Endothelial cell of umbilical vein (primary cell): ENCODE measurements at regions of chr22 and their contacts with region 1.

Region 1: DNA sequence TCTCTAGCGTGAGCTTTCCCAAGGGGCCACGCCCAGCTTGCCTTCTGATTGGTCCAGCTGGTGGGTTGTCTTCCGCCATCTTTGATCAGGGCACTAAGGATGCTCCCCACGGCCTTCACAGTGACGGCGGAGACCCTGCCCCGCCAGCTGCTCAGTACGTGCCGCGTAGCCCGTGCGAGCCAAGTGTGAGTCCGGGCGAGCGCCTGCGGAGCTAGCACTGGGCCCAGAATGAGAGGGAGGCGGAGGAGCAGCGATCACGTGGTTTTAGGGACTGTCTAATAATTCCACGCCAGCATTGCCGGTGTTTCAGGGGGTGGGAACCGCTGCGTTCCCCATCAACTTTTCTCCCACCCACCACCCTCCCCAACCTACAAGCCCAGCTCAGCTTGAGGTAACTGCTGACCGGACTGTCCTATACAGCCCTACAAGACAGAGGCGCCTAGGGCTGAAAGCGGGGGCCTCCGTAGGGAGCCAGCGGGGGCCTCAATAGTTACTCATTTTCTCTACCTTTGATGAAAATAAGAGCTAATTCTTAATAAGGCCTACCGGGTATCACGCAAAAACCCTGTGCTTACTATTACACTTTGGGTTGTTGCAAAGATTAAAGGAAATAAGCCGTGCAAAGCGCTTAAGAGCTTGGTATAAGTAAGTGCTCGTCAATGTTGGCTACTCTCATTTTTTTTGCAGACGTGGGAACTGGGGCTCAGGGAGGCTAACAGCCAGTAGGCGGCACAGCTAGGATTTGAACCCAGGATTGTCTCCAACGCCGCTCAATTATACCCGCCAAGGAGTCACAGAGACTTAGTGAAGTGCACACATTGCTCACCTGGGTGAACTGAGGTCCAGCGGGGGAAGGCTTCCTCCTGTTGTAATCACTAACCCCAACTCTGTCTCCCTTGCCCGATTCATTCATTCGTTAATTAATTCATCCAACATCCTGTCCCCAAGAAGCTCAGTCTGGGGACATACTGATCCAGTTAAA is 1.3 kb upstream of the MTFP1 start:
- DNase-seq: peak; percentile 100
- H3K4me3 ChIP-seq: peak overlapping the region; percentile 2 to 28 (median 19)
- H3K27ac ChIP-seq: peak overlapping the region; percentile 98
- H3K4me1 ChIP-seq: peaks cover 59% of the 10 kb centered on the region
- H3K27me3 ChIP-seq: no peaks in the 10 kb centered on the region
- CTCF ChIP-seq: peak in 1 of 2 donors; percentile 5
- POLR2A ChIP-seq: peak; percentile 72

Region 2: DNA sequence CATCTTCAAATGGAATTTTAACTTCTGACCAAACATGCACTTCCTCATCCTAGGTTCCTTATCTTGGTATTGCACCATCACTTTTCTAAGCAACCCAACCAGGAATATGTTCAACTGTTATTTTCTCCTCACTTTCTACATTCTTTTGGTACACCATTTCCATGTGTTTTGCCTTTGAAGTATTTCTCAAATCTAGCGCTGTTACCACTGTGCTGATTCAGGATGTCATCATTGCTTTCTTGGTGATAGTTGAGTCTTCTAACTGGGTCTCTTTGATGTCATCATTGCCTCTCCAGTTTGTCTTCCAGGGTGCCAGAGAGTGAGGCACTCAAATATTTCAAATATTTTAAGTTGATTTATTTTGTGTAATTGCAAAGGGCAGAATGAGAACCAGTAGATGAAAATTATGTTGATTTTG is 296.5 kb before region 1 on chr22:
- CTCF ChIA-PET with region 1: no interaction called
- POLR2A ChIA-PET with region 1: no interaction called
- dilution Hi-C with region 1: no loop called
- intact Hi-C with region 1: no loop called
- DNase-seq: no peak
- H3K4me3 ChIP-seq: no peak overlapping the region
- H3K27ac ChIP-seq: no peak overlapping the region
- H3K4me1 ChIP-seq: no peaks in the 10 kb centered on the region
- H3K27me3 ChIP-seq: peaks cover 13 to 16% of the 10 kb centered on the region in 2 experiments
- CTCF ChIP-seq: no peak
- POLR2A ChIP-seq: no peak

Region 3: GRCh38 chr22:30305519-30305905 is 118.8 kb before region 1 on chr22:
- CTCF ChIA-PET with region 1: no interaction called
- POLR2A ChIA-PET with region 1: no interaction called
- dilution Hi-C with region 1: no loop called
- intact Hi-C with region 1: no loop called
- DNase-seq: peak; percentile 55
- H3K4me3 ChIP-seq: no peak overlapping the region
- H3K27ac ChIP-seq: peak overlapping the region; percentile 41
- H3K4me1 ChIP-seq: peaks cover 36% of the 10 kb centered on the region
- H3K27me3 ChIP-seq: no peaks in the 10 kb centered on the region
- CTCF ChIP-seq: no peak
- POLR2A ChIP-seq: peak; percentile 41

Region 4: GRCh38 chr22:30386960-30387827 is 37.1 kb before region 1 on chr22 and contains the start of gene RNF215:
- CTCF ChIA-PET with region 1: interaction called, 58 read pairs
- POLR2A ChIA-PET with region 1: no interaction called
- dilution Hi-C with region 1: no loop called
- intact Hi-C with region 1: loop called (anchors 1 kb)
- DNase-seq: peak; percentile 78
- H3K4me3 ChIP-seq: peak within 1 kb of the TSS; percentile 36 to 70 (median 43)
- H3K27ac ChIP-seq: peak within 1 kb of the TSS; percentile 20
- H3K4me1 ChIP-seq: peaks cover 15% of the 10 kb centered on the region
- H3K27me3 ChIP-seq: no peaks in the 10 kb centered on the region
- CTCF ChIP-seq: peak; percentile 90 to 91
- POLR2A ChIP-seq: no peak
- total RNA-seq, gene RNF215: 24.4 and 26.9 TPM in 2 replicates

Region 5: GRCh38 chr22:30408414-30409104 is 15.7 kb before region 1 on chr22:
- CTCF ChIA-PET with region 1: interaction called, 21 read pairs
- POLR2A ChIA-PET with region 1: no interaction called
- dilution Hi-C with region 1: no loop called
- intact Hi-C with region 1: no loop called
- DNase-seq: peak; percentile 50
- H3K4me3 ChIP-seq: no peak overlapping the region
- H3K27ac ChIP-seq: peak overlapping the region; percentile 6
- H3K4me1 ChIP-seq: peaks cover 6% of the 10 kb centered on the region
- H3K27me3 ChIP-seq: no peaks in the 10 kb centered on the region
- CTCF ChIP-seq: no peak
- POLR2A ChIP-seq: no peak

Region 6: DNA sequence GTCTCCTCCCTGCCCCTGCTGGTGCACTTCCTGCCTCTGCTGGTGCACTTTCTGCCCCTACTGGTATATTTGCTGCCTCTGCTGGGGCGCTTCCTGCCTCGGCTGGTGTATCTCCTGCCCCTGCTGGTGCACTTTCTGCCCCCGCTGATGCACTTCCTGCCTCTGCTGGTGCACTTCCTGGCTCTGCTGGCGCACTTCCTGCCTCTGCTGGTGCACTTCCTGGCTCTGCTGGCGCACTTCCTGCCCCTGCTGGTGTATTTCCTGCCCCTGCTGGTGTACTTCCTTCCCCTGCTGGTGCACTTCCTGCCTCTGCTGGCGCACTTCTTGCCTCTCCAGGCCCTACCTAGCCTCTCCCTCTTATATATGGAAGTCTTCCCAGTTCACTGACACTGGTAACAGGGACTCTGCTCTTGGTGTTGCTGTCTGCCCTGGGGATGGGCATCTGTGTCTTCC is 11.4 kb after region 1 on chr22:
- CTCF ChIA-PET with region 1: interaction called, 24 read pairs
- POLR2A ChIA-PET with region 1: no interaction called
- dilution Hi-C with region 1: no loop called
- intact Hi-C with region 1: no loop called
- DNase-seq: peak; percentile 31
- H3K4me3 ChIP-seq: no peak overlapping the region
- H3K27ac ChIP-seq: peak overlapping the region; percentile 63
- H3K4me1 ChIP-seq: peaks cover 10% of the 10 kb centered on the region
- H3K27me3 ChIP-seq: no peaks in the 10 kb centered on the region
- CTCF ChIP-seq: peak in 1 of 2 donors; percentile 11
- POLR2A ChIP-seq: no peak

Region 7: GRCh38 chr22:30485362-30485988 is 61.2 kb after region 1 on chr22:
- CTCF ChIA-PET with region 1: interaction called, 5 read pairs
- POLR2A ChIA-PET with region 1: no interaction called
- dilution Hi-C with region 1: no loop called
- intact Hi-C with region 1: loop called (anchors 1 kb)
- DNase-seq: peak; percentile 59
- H3K4me3 ChIP-seq: no peak overlapping the region
- H3K27ac ChIP-seq: no peak overlapping the region
- H3K4me1 ChIP-seq: no peaks in the 10 kb centered on the region
- H3K27me3 ChIP-seq: no peaks in the 10 kb centered on the region
- CTCF ChIP-seq: peak; percentile 86 to 93
- POLR2A ChIP-seq: no peak

Region 8: GRCh38 chr22:30634471-30635233 is 210.4 kb after region 1 on chr22:
- CTCF ChIA-PET with region 1: no interaction called
- POLR2A ChIA-PET with region 1: no interaction called
- dilution Hi-C with region 1: no loop called
- intact Hi-C with region 1: no loop called
- DNase-seq: peak; percentile 91
- H3K4me3 ChIP-seq: peak overlapping the region; percentile 20 to 52 (median 51)
- H3K27ac ChIP-seq: peak overlapping the region; percentile 93
- H3K4me1 ChIP-seq: peaks cover 31% of the 10 kb centered on the region
- H3K27me3 ChIP-seq: no peaks in the 10 kb centered on the region
- CTCF ChIP-seq: peak; percentile 95 to 98
- POLR2A ChIP-seq: no peak